Esophagus squamous epithelium (tissue), 5 donors: ENCODE measurements at regions of chr10 and their contacts with region 1.

Region 1: GRCh38 chr10:5434017-5434753 is 21.8 kb downstream of the NET1 start:
- DNase-seq: no peak
- H3K4me3 ChIP-seq: no peak overlapping the region
- H3K27ac ChIP-seq: no peak overlapping the region
- H3K4me1 ChIP-seq: no peaks in the 10 kb centered on the region
- H3K27me3 ChIP-seq: no peaks in the 10 kb centered on the region
- CTCF ChIP-seq: peak; percentile 19 to 78 (median 58)
- POLR2A ChIP-seq: no peak

Region 2: DNA sequence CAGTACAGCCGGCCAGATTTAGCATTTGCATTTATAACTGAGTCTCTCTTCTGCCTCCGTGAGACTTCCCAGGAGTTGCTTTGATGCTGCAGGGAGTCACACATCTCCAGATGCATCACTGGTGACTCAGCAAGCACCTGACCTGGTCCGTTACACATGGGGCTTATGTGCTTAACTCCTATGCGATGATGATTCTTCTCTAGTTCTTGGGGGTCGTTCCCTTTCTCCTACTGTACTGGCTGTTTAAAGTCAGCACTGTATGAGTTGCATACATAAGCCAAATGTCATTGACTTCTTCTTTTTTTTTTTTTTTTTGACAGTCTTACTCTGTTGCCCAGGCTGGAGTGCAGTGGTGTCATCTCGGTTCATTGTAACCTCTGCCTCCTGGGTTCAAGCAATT is 621.2 kb before region 1 on chr10:
- intact Hi-C with region 1: loop called (anchors 10 kb)
- DNase-seq: no peak
- H3K4me3 ChIP-seq: no peak overlapping the region
- H3K27ac ChIP-seq: no peak overlapping the region
- H3K4me1 ChIP-seq: peaks cover 0 to 7% (median 0%) of the 10 kb centered on the region in 3 donors
- H3K27me3 ChIP-seq: no peaks in the 10 kb centered on the region
- CTCF ChIP-seq: no peak
- POLR2A ChIP-seq: no peak

Region 3: DNA sequence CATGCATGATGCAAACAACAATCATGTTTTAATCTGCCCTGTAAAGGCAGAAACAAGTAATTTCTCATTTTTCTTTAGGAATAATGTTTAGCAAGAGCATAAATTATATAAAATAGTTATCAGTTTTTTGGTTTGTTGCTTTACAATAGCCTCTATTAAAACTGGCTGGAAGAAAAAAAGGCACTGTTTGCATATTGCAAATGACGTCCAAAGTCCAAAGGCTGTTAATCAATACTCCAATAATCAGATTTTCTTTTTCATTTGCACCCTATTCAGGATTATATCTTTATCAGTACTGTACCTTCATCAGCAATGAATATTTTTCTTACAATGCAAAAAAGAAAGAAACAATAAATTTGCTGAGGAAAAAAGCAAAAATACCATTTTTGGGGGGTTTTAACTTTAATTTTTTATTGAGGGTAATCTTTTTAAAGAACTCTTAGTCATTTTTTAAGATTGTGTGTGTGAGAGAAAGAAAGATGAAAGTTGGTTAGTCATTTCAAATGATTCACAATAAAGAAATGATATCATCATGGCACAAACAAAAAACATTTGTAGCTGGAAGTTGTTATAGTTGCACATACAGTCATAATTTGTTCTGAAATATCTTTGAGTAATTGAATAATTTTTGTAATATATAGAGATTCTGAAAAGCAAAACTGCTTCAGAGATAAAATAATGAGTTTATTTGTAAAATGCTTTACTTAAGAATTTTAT is 386.1 kb before region 1 on chr10:
- intact Hi-C with region 1: no loop called
- DNase-seq: no peak
- H3K4me3 ChIP-seq: no peak overlapping the region
- H3K27ac ChIP-seq: no peak overlapping the region
- H3K4me1 ChIP-seq: peaks cover 0 to 24% (median 3%) of the 10 kb centered on the region in 3 donors
- H3K27me3 ChIP-seq: no peaks in the 10 kb centered on the region
- CTCF ChIP-seq: no peak
- POLR2A ChIP-seq: no peak

Region 4: GRCh38 chr10:5534880-5535856 is 101.0 kb after region 1 on chr10:
- intact Hi-C with region 1: no loop called
- DNase-seq: no peak
- H3K4me3 ChIP-seq: no peak overlapping the region
- H3K27ac ChIP-seq: peak overlapping the region; percentile 9 to 40 (median 29)
- H3K4me1 ChIP-seq: peaks cover 26 to 67% (median 52%) of the 10 kb centered on the region in 3 donors
- H3K27me3 ChIP-seq: no peaks in the 10 kb centered on the region
- CTCF ChIP-seq: no peak
- POLR2A ChIP-seq: no peak